Common myeloid progenitor, CD34-positive (primary cell): ENCODE measurements at regions of chr7 and their contacts with region 1.

Region 1: GRCh38 chr7:100586266-100587025 is at the start of gene FBXO24:
- DNase-seq: peak; percentile 100
- H3K4me3 ChIP-seq: peak within 1 kb of the TSS; percentile 94 to 96 (median 95)
- H3K27ac ChIP-seq: peak within 1 kb of the TSS; percentile 78 to 94
- H3K4me1 ChIP-seq: peaks cover 6 to 60% (median 51%) of the 10 kb centered on the region in 4 experiments
- H3K27me3 ChIP-seq: peaks cover 0 to 4% (median 0%) of the 10 kb centered on the region in 5 experiments

Region 2: GRCh38 chr7:100556541-100556940 is 29.9 kb before region 1 on chr7:
- CTCF ChIA-PET with region 1: interaction called, 242 read pairs
- POLR2A ChIA-PET with region 1: no interaction called
- DNase-seq: peak; percentile 60 to 84 (median 83)
- H3K4me3 ChIP-seq: no peak overlapping the region
- H3K27ac ChIP-seq: peak overlapping the region in 1 of 2 experiments; percentile 68
- H3K4me1 ChIP-seq: peaks cover 0 to 11% (median 10%) of the 10 kb centered on the region in 4 experiments
- H3K27me3 ChIP-seq: no peaks in the 10 kb centered on the region

Region 3: DNA sequence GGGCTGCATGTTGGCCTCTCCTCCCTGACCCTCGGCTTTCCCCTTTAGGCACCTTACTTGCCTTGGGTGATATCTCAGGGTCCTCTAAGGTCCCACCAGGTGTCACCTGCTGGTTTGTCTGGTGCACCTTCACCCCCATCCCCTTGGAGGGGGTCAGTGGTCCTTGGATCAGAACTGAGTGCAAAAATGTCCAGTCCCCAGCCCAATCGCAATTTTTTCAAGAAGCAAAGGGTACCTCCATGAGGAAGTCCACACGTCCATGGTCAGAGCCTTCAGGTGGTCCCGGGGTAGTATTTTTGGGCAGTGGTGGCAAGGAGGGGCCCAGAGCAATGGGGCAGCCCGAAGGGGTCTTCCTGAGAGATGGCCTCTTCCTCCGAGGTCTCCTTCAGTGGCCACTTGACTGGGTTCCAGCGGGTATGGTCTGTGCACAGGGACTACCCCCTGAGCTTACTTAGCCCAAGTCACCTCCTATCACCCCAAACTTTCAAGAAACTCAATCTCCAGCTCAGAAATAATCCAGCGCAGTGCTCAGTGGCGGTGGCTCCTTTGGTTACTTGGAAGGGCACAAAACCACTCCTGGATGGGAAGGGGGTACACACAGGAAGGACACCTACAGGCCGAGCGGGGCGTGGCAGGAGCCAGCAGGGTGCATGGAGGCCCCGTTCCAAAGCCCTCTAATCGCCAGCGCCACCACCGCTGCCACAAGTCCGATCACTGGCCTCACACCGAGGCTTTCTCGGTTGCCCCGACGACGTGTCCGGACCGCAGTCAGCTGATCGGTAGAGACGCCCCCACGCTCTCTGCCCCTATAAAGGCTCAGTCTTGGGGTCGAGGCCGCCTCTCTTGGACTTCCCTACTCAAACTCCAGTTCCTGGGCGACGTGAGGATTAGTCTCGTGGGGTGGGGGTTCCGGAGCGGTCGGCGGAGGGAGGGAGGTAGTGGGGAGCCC is 17.3 kb before region 1 on chr7:
- CTCF ChIA-PET with region 1: interaction called, 242 read pairs
- POLR2A ChIA-PET with region 1: interaction called, 34 read pairs
- DNase-seq: peak; percentile 46 to 79 (median 66)
- H3K4me3 ChIP-seq: peak overlapping the region in 5 of 7 experiments; percentile 0 to 62 (median 51)
- H3K27ac ChIP-seq: no peak overlapping the region
- H3K4me1 ChIP-seq: peaks cover 0 to 46% (median 40%) of the 10 kb centered on the region in 4 experiments
- H3K27me3 ChIP-seq: no peaks in the 10 kb centered on the region

Region 4: GRCh38 chr7:100611974-100612729 is 25.7 kb after region 1 on chr7 and contains the start of gene MOSPD3:
- CTCF ChIA-PET with region 1: interaction called, 27 read pairs
- POLR2A ChIA-PET with region 1: interaction called, 5 read pairs
- DNase-seq: peak; percentile 99 to 100 (median 99)
- H3K4me3 ChIP-seq: peak within 1 kb of the TSS; percentile 75 to 91 (median 84)
- H3K27ac ChIP-seq: peak within 1 kb of the TSS; percentile 40 to 88
- H3K4me1 ChIP-seq: peaks cover 4 to 24% (median 19%) of the 10 kb centered on the region in 4 experiments
- H3K27me3 ChIP-seq: peaks cover 0 to 2% (median 0%) of the 10 kb centered on the region in 5 experiments